Right cardiac atrium (tissue), 5 donors: ENCODE measurements at regions of chr4 and their contacts with region 1.

Region 1: DNA sequence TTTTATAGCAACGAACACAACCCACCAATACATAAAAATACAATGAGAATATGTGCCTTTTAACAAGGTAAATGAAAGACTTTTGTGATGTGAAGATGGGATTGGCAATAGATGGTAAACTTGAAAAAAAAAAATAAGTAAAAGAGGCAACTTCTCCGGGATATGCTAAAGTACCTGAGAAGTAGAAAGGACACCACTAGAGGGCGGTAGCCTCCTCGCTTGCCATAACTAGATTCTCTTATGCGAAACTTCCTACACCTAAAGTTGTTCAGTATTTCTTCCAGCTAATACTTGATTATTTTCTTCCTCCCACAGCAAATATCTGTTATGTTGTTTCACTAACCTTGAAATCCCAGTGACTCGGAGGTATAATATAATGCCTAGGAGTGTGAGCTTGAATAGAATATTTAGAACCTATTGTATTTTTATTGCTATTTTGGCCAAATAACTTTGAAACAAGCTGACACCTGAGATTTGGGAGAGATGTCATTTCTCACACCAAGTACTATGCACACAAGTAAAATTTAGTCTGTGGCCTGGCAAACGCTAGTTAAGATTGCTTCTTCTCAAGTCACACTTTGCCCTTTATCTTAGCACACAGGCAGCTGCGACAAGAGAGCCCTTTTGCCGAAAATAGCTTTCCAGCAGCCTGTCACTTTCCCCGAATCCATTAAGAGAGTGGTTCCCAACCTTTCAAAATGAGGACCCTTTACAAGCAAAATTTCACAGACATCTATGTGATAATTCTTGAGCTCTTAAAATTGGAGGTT is 44.9 kb upstream of the PDLIM5 start:
- DNase-seq: peak; percentile 61 to 84 (median 62)
- ATAC-seq: peak; percentile 59 to 60
- H3K4me3 ChIP-seq: no peak overlapping the region
- H3K27ac ChIP-seq: no peak overlapping the region
- H3K4me1 ChIP-seq: no peaks in the 10 kb centered on the region
- H3K27me3 ChIP-seq: no peaks in the 10 kb centered on the region

Region 2: GRCh38 chr4:94577136-94577535 is 170.3 kb after region 1 on chr4:
- intact Hi-C with region 1: loop called in 1 of 4 experiments (anchors 5 kb)
- DNase-seq: peak; percentile 44 to 73 (median 52)
- ATAC-seq: peak; percentile 69 to 83
- H3K4me3 ChIP-seq: no peak overlapping the region
- H3K27ac ChIP-seq: no peak overlapping the region
- H3K4me1 ChIP-seq: peaks cover 3% of the 10 kb centered on the region
- H3K27me3 ChIP-seq: no peaks in the 10 kb centered on the region

Region 3: DNA sequence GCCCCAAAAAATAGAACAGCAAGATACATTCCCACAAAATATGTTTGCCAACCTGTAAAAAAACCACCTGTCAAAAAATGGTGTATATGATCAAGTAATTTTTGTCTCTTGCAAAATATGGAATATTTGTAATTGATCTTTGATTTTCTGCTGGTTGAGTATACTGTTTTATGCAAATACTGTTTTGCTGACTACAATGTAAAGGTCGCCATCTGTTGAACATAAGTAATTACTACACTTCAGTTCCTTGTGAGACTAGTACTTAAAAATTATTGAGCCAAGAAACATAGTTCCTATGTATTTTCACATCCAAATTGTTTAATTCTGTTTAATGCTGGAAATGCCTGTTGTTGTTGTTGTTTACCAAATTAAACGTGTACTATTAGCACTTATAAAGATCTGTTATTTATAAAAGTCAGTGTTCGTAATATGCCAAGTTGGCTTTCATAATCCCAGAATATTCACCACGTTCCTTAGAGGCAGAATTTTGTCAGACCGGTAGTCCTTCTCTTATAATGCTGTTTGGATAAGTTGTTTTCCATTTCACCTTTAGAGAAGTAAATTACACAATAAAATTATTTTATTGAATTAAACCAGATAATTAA is 189.1 kb after region 1 on chr4:
- intact Hi-C with region 1: loop called in 3 of 4 experiments (anchors 2 to 5 kb)
- DNase-seq: no peak
- ATAC-seq: no peak
- H3K4me3 ChIP-seq: no peak overlapping the region
- H3K27ac ChIP-seq: no peak overlapping the region
- H3K4me1 ChIP-seq: peaks cover 1% of the 10 kb centered on the region
- H3K27me3 ChIP-seq: no peaks in the 10 kb centered on the region